ENCODE measurements at regions of chr7 and their contacts with region 1.

Region 1: DNA sequence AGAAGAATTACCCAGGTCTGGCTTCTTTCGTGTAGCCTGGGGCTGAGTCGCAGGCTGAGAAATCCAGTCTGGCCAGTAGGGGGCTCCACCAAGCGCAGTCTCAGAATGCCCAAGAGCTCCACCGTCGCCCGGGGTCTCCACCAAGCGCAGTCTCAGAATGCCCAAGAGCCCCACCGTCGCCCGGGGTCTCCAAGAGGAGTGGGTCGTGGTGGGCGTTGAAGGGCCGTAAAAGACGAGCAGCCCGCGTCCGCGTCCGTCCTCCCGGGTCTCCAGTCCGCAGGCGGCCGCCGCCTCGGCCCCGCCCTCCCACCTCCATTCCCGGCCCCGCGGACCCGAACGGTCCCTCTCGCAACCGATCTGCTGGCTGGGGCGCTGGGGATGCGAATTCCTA is 895 bp upstream of the ZYX start:
- DNase-seq: peak; percentile 94
- ATAC-seq: peak; percentile 84

Region 2: DNA sequence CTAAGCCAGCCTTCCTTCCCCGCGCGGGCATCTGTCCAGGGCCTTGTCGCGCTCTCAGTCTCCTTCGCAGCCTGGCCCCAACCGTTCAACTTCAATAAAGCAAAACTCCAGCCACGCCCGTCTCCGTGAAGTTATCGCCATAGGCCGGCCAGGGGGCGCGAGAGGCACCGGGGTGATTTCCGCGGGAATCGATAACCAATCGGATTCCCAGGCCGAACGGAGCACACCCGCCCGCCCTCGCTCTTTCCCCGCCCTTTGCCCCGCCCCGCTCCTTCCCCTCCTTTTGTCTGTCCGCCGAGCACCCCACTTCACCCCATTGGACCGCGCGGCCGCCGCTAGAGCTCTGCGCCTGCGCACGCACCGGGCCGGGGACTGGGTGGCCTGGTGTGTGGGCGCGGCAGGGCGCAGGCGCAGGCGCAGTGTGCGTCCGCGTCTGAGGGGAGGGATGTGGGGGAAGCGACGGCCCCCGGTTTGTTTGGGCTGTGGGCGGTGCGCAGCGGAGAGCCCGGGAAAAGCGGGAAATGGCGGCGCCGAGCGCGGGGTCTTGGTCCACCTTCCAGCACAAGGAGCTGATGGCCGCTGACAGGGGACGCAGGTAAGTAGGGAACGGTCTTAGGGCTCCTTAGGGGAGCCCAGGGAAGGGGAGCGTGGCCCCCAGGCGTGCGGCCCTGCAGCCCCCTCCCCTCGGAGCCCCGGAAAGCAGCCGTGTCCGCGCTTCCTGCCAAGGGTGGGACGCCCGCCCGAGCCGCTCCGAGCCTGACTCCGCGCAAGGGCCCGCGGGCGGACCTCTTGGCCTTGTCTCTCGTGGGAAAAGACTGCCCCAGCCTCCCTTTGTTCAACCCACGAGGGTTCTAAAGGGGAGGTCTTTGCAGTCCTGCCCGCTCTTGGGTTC is 92.1 kb before region 1 on chr7 and contains the start of gene CASP2:
- intact Hi-C with region 1: loop called (anchors 10 kb)
- DNase-seq: peak; percentile 99
- ATAC-seq: peak; percentile 98
- total RNA-seq, gene CASP2: 11.1 TPM